Heart right ventricle (tissue), 16 donors: ENCODE measurements at regions of chr12 and their contacts with region 1.

Region 1: DNA sequence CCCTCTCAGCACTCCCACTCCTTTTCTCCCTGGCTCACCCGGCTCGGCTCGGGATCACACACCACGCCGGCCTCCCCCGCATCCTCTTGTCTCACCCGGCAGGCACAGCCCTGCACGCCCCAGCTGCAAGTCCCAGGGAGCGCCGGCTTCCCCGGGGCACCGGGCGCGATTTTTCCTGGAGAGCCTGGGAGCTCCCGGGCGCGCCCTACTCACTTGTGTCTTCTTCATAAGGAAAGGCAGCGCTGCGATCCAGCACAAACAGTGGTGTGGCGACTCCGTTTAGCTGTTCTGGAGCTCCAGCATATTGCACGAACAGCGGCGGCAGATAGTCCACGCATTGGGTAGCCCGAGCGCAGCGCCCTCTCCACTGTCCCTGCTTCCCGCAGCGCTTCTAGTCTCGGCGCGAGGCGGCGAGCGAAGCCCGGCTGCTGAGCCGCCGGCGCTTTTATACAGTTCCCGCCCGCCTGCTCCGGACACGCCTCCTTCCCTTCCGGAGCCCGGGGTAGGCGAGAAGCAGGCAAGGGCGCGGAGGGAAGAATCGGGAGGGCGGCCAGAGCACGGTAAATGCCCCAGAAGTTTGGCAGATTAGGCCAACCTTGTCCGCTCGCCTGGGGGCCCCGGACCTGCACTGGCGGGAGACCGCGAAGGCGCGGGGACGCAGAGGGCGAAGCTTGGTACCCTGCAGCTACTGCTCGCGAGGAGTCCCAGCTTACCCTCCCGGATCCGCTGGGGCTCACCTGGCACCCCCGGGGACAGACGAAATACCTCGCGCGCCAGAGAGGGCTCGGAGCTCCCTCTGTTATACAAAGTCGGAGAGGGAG is at the start of gene KITLG:
- DNase-seq: peak; percentile 83 to 86
- ATAC-seq: peak; percentile 96 to 98 (median 97)
- H3K4me3 ChIP-seq: peak within 1 kb of the TSS; percentile 67 to 86 (median 73)
- H3K27ac ChIP-seq: peak within 1 kb of the TSS; percentile 66 to 91 (median 83)
- H3K4me1 ChIP-seq: peaks cover 0 to 27% (median 14%) of the 10 kb centered on the region in 9 donors
- H3K27me3 ChIP-seq: peaks cover 0 to 42% (median 0%) of the 10 kb centered on the region in 7 donors
- CTCF ChIP-seq: peak in 6 of 9 donors; percentile 30 to 65 (median 50)
- total RNA-seq, gene KITLG: 4.2 to 20.5 (median 9.3) TPM

Region 2: GRCh38 chr12:88141770-88142609 is 438.3 kb before region 1 on chr12 and contains the starts of genes CEP290 and TMTC3:
- intact Hi-C with region 1: loop called in 1 of 10 experiments (anchors 10 kb)
- DNase-seq: peak; percentile 88 to 98
- ATAC-seq: peak; percentile 99 to 100 (median 99)
- H3K4me3 ChIP-seq: peak within 1 kb of the TSS; percentile 46 to 91 (median 74)
- H3K27ac ChIP-seq: peak within 1 kb of the TSS in 9 of 10 donors; percentile 48 to 86 (median 78)
- H3K4me1 ChIP-seq: peaks cover 0 to 28% (median 20%) of the 10 kb centered on the region in 9 donors
- H3K27me3 ChIP-seq: no peaks in the 10 kb centered on the region
- CTCF ChIP-seq: no peak
- total RNA-seq, gene CEP290: 6.0 to 10.9 (median 7.9) TPM
- total RNA-seq, gene TMTC3: 6.5 to 11.9 (median 9.0) TPM

Region 3: DNA sequence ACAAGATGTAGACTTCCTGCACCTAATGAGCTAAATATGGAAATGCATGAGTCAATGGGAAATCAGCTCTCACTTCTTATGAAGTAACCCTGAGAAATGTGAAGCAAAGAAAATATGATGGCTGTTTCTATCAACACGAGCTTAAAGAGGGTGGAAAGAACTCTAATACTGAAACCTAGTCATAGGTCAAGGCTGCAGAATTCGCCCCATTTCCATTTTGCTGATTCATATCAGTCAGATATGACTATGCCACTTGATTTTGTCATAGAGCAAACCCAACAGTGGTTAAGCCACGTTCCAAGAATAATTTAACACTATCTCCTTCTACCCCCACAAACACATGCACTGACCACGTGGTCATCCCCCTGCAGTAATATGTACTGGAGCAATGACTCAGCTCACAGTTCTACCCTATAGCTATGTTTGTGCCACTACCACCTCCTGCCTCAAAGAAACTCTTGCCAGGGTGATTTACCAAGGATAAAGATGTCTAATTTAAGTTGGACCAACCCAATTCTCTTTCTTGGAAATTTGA is 280.6 kb before region 1 on chr12:
- intact Hi-C with region 1: no loop called
- DNase-seq: no peak
- ATAC-seq: peak in 1 of 8 donors; percentile 50
- H3K4me3 ChIP-seq: no peak overlapping the region
- H3K27ac ChIP-seq: peak overlapping the region in 1 of 10 donors; percentile 52
- H3K4me1 ChIP-seq: peaks cover 0 to 21% (median 0%) of the 10 kb centered on the region in 9 donors
- H3K27me3 ChIP-seq: no peaks in the 10 kb centered on the region
- CTCF ChIP-seq: no peak

Region 4: GRCh38 chr12:88418856-88419497 is 161.3 kb before region 1 on chr12:
- intact Hi-C with region 1: loop called in 1 of 10 experiments (anchors 5 kb)
- DNase-seq: no peak
- ATAC-seq: no peak
- H3K4me3 ChIP-seq: no peak overlapping the region
- H3K27ac ChIP-seq: no peak overlapping the region
- H3K4me1 ChIP-seq: peaks cover 0 to 17% (median 0%) of the 10 kb centered on the region in 9 donors
- H3K27me3 ChIP-seq: no peaks in the 10 kb centered on the region
- CTCF ChIP-seq: no peak

Region 5: DNA sequence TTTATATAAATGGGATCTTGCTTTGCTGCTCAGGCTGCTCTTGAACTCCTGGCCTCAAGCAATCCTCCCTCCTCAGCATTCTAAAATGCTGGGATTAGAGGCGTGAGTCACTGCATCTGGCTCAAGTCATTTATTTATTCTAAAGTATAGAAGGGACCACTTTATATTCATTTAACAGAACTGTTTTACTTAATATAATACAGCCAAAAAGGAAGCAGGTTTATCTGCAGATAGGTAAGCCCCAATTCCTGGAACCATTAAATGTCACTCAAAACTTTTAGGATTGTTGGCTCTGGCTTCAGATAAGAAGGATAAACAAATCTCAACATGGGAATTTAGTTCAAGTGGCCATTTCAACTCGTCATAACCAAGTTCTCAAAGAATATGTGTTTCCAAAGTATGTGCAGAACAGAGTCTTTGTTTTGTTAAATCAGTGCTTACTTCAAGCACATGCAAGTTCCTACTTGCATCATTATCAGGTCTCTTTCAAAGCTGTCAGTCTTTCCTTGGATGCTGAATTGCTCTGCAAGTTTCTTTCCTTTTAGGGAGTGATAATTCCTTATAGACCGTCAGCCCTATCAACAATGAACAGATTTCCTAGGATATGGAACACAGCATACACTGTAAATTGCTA is 60.3 kb before region 1 on chr12:
- intact Hi-C with region 1: loop called in 1 of 10 experiments (anchors 10 kb)
- DNase-seq: no peak
- ATAC-seq: peak in 2 of 8 donors; percentile 29 to 34
- H3K4me3 ChIP-seq: no peak overlapping the region
- H3K27ac ChIP-seq: peak overlapping the region in 3 of 10 donors; percentile 1 to 26 (median 2)
- H3K4me1 ChIP-seq: peaks cover 0 to 26% (median 5%) of the 10 kb centered on the region in 9 donors
- H3K27me3 ChIP-seq: no peaks in the 10 kb centered on the region
- CTCF ChIP-seq: no peak

Region 6: DNA sequence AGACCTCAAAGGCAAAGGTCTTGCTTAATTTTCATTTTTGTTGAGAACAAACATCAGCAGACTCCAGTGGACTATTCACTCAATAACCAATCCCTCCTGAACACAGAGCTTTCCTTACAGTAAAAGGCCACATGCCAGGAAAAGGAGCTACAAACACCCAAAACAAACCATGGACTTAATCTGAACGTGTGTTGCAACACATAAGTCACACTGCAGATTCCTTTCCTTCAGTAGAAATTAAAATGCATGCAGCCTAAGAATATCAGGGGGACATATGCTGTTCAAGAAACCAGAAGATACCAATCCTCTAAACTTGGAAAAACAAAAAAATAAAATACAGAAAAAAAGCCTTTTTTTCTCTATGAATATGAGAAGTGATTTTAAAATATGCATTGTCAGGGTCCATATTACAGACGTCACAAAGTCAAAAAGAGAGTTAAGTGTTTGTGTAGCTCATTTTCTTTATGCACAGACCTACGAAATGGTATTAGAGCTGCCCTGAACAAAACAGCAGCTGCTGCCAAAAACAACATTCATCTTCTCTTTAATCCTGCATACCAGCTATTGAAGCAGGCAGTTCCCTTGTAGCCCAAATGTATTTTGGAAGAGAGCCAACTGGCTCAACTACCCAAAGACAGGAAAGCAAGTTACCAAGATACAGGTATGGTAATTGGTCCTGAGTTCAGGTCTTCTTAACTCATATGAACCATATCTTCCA is 26.2 kb before region 1 on chr12:
- intact Hi-C with region 1: no loop called
- DNase-seq: no peak
- ATAC-seq: peak in 5 of 8 donors; percentile 13 to 62 (median 53)
- H3K4me3 ChIP-seq: no peak overlapping the region
- H3K27ac ChIP-seq: peak overlapping the region in 3 of 10 donors; percentile 26 to 45 (median 31)
- H3K4me1 ChIP-seq: peaks cover 0 to 73% (median 32%) of the 10 kb centered on the region in 9 donors
- H3K27me3 ChIP-seq: no peaks in the 10 kb centered on the region
- CTCF ChIP-seq: no peak

Region 7: GRCh38 chr12:88658009-88658408 is 77.7 kb after region 1 on chr12:
- intact Hi-C with region 1: loop called in 1 of 10 experiments (anchors 5 kb)
- DNase-seq: peak in 1 of 2 donors; percentile 58
- ATAC-seq: peak in 7 of 8 donors; percentile 59 to 89 (median 81)
- H3K4me3 ChIP-seq: no peak overlapping the region
- H3K27ac ChIP-seq: peak overlapping the region in 5 of 10 donors; percentile 19 to 69 (median 60)
- H3K4me1 ChIP-seq: peaks cover 0 to 22% (median 12%) of the 10 kb centered on the region in 9 donors
- H3K27me3 ChIP-seq: no peaks in the 10 kb centered on the region
- CTCF ChIP-seq: no peak

Region 8: DNA sequence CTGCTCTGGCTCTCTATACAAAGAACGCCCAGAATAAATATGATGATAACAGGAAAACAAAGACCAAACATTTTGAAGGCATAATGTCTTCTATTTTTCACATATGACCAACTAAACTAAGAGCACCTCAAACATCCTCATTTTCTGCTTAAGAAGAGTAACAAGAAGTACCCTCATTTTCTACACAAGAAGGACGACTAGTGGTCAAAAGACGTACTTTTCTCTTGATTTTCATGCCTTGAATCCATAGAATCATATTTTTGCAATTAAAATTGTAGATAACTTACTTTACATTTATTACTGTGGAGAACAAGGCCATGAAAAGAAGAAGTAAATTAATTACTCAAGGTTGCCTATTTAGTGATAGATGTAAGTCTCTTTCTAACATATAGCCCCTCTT is 413.4 kb after region 1 on chr12:
- intact Hi-C with region 1: loop called in 7 of 10 experiments (anchors 2 to 10 kb)
- DNase-seq: no peak
- ATAC-seq: peak in 1 of 8 donors; percentile 49
- H3K4me3 ChIP-seq: no peak overlapping the region
- H3K27ac ChIP-seq: no peak overlapping the region
- H3K4me1 ChIP-seq: peaks cover 0 to 4% (median 0%) of the 10 kb centered on the region in 9 donors
- H3K27me3 ChIP-seq: no peaks in the 10 kb centered on the region
- CTCF ChIP-seq: peak; percentile 32 to 76 (median 60)

Region 9: DNA sequence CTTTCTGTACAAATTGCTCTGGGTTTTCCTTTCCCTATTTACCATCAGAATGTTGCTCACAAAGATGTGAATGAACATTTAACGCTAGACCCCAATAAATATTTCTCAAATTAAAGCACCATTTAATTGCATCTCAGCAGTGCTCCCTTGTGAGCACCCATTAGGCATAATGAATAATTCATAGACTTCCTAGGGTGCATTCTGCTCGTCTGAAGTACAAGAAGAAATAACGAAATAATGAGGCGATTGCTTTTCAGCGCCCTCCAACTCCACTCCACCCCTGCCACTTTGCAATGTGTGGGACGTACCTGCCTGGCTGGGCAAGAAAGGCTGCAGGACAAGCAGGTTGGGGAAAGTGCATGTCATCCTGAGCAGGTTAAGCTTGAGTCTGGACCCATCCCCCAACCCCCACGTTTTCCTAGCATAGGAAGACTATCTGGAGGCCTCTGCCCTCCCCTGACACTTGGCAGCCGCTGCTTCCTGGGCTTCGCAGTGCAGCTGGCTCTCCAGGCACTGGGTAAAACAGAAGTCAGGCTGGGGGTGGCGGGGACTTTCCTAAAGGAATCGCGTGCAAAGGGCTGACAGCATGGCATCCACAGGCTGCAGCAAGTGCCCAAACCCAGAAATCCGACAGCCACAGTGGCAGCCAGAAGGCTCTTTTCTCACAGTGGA is 518.3 kb after region 1 on chr12:
- intact Hi-C with region 1: no loop called
- DNase-seq: peak; percentile 27 to 33
- ATAC-seq: peak in 6 of 8 donors; percentile 42 to 80 (median 49)
- H3K4me3 ChIP-seq: no peak overlapping the region
- H3K27ac ChIP-seq: no peak overlapping the region
- H3K4me1 ChIP-seq: peaks cover 0 to 9% (median 0%) of the 10 kb centered on the region in 9 donors
- H3K27me3 ChIP-seq: no peaks in the 10 kb centered on the region
- CTCF ChIP-seq: no peak